Activated CD8-positive, alpha-beta T cell treated with anti-CD3 and anti-CD28 coated beads, Interleukin-2, amount 10 ng/mL, durations not matched to agents 7 days and 5 days (primary cell): ENCODE measurements at regions of chr1 and their contacts with region 1.

Region 1: DNA sequence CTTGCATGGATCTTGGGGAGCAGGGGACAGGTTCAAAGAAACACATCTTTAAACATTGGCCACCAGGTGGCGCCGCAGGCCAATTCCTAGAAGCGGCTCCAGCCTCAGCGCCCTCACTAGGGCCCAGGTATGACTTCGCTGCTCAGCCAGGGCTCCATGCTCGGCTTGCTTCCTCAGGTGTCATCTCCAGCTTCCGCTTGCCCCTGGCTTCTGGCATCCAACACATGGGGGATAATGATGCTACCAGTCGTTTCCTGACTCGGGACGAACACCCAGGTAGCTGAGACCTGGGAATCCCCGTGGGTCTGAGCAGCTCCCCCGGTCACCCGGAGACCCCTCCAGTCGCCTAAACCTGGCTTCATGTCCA is 8.5 kb upstream of the MEX3A start:
- DNase-seq: peak; percentile 92
- ATAC-seq: peak; percentile 98
- H3K4me3 Mint-ChIP-seq: no peak overlapping the region
- H3K27ac Mint-ChIP-seq: no peak overlapping the region
- H3K4me1 Mint-ChIP-seq: peaks cover 15% of the 10 kb centered on the region
- H3K27me3 Mint-ChIP-seq: peaks cover 38% of the 10 kb centered on the region

Region 2: GRCh38 chr1:156106624-156107488 is 16.1 kb after region 1 on chr1:
- CTCF ChIA-PET with region 1: interaction called, 112 read pairs
- POLR2A ChIA-PET with region 1: no interaction called
- DNase-seq: no peak
- ATAC-seq: no peak
- H3K4me3 Mint-ChIP-seq: peak overlapping the region; percentile 24
- H3K27ac Mint-ChIP-seq: peak overlapping the region; percentile 69
- H3K4me1 Mint-ChIP-seq: peaks cover 35% of the 10 kb centered on the region
- H3K27me3 Mint-ChIP-seq: peaks cover 29% of the 10 kb centered on the region